ENCODE measurements at regions of chr6 and their contacts with region 1.

Region 1: DNA sequence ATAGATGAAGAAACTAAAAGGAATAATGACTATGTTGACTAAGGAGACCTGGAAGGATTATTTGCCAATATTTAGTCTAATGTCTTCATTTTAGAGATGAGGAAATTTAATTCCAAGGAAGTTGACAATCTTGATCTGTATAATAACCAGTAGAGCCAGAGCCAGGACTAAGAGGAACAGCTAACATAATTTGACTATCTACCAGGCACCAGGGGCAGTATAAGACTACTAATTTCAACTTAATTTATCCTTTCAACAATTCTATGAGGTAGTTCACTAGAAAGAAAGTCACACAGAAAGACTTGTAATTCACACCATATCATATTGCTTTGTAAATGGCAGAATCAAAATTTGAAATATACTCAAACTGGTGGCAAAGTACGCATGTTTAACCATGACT is 273.0 kb upstream of the STXBP5 start:
- DNase-seq: peak in 1 of 35 experiments; percentile 14
- ATAC-seq: no peak
- H3K4me3 ChIP-seq: no peak overlapping the region
- H3K4me3 Mint-ChIP-seq: no peak overlapping the region
- H3K27ac ChIP-seq: no peak overlapping the region
- H3K27ac Mint-ChIP-seq: no peak overlapping the region
- H3K4me1 ChIP-seq: no peaks in the 10 kb centered on the region
- H3K4me1 Mint-ChIP-seq: no peaks in the 10 kb centered on the region
- H3K27me3 ChIP-seq: no peaks in the 10 kb centered on the region
- H3K27me3 Mint-ChIP-seq: peaks cover 0 to 4% of the 10 kb centered on the region in 2 donors

Region 2: DNA sequence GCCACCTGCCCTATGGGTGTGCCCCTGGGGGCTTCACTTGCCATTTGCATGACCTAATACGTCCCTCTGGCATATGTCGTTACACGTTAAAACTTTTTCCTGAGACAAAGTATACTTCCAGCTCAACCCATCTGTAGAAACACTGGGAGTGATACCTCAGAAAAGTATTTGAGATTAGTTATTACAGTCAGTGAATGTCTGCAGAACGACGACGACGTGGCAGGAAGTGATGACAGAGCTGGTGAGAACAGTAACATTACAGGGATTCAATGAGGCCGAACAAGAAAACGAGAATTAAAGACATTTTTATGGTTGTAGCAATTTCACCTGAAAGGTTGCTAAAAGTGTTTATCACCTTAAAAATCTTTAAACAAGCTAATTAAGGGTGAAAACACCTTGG is 1451.7 kb after region 1 on chr6:
- CTCF ChIA-PET with region 1: no interaction called
- POLR2A ChIA-PET with region 1: interaction called in 1 of 2 experiments, 14 read pairs
- DNase-seq: no peak
- ATAC-seq: no peak
- H3K4me3 ChIP-seq: no peak overlapping the region
- H3K4me3 Mint-ChIP-seq: no peak overlapping the region
- H3K27ac ChIP-seq: no peak overlapping the region
- H3K27ac Mint-ChIP-seq: no peak overlapping the region
- H3K4me1 ChIP-seq: no peaks in the 10 kb centered on the region
- H3K4me1 Mint-ChIP-seq: no peaks in the 10 kb centered on the region
- H3K27me3 ChIP-seq: no peaks in the 10 kb centered on the region
- H3K27me3 Mint-ChIP-seq: peaks cover 3 to 7% of the 10 kb centered on the region in 2 donors

Measured in T-cell (primary cell).